ENCODE measurements at regions of chr2 and their contacts with region 1.

Region 1: DNA sequence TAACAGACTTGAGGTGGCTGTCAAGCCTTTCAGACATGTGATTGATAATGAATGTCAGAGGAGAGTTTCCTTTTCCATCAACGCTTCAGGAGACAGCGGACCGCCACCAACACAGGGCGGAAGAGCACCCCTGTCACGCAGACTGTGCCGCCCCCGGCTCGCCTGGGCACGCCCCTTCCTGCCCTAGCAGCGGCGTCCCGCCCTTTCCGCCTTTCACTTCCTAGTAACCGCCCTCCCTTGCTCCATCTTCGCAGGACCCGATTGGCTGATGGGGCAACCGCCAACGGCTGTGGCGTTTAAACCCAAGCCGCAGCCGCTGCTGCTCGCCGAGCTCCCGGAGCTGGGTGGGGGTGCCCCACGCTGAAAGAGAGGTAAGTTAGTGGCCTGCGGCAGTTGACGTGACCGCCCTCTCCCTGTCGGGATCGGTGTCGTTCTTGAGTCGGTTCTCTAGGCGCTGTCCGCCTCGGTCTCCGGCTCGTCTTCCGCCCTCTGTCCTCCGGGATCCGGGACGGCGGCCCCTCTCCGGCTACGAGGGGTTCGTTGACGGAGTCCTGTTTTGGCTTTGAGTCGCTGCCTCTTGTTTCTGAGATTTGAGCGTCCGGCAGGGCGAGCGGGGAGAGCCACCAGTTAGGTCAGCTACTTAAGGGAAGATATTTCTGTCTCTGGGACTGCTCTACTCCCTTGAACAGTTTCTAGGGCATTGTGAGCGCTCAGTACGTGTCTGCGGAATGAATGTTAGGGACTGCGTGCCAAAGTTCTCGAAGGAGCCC is at the start of gene SGO2:
- DNase-seq: peak; percentile 90
- ATAC-seq: peak; percentile 100
- H3K4me3 Mint-ChIP-seq: peak within 1 kb of the TSS; percentile 95
- H3K27ac Mint-ChIP-seq: peak within 1 kb of the TSS; percentile 80
- H3K4me1 Mint-ChIP-seq: peaks cover 14% of the 10 kb centered on the region
- H3K27me3 Mint-ChIP-seq: peaks cover 5% of the 10 kb centered on the region
- CTCF ChIP-seq: no peak
- total RNA-seq, gene SGO2: 3.3 and 3.8 TPM in 2 replicates

Region 2: GRCh38 chr2:199911052-199911876 is 614.8 kb before region 1 on chr2 and contains the start of gene C2orf69:
- CTCF ChIA-PET with region 1: no interaction called
- POLR2A ChIA-PET with region 1: no interaction called
- intact Hi-C with region 1: loop called (anchors 1 kb)
- DNase-seq: peak; percentile 86
- ATAC-seq: peak; percentile 83
- H3K4me3 Mint-ChIP-seq: peak within 1 kb of the TSS; percentile 94
- H3K27ac Mint-ChIP-seq: peak within 1 kb of the TSS; percentile 94
- H3K4me1 Mint-ChIP-seq: peaks cover 35% of the 10 kb centered on the region
- H3K27me3 Mint-ChIP-seq: no peaks in the 10 kb centered on the region
- CTCF ChIP-seq: no peak
- total RNA-seq, gene C2orf69: 12.1 and 12.6 TPM in 2 replicates

Region 3: DNA sequence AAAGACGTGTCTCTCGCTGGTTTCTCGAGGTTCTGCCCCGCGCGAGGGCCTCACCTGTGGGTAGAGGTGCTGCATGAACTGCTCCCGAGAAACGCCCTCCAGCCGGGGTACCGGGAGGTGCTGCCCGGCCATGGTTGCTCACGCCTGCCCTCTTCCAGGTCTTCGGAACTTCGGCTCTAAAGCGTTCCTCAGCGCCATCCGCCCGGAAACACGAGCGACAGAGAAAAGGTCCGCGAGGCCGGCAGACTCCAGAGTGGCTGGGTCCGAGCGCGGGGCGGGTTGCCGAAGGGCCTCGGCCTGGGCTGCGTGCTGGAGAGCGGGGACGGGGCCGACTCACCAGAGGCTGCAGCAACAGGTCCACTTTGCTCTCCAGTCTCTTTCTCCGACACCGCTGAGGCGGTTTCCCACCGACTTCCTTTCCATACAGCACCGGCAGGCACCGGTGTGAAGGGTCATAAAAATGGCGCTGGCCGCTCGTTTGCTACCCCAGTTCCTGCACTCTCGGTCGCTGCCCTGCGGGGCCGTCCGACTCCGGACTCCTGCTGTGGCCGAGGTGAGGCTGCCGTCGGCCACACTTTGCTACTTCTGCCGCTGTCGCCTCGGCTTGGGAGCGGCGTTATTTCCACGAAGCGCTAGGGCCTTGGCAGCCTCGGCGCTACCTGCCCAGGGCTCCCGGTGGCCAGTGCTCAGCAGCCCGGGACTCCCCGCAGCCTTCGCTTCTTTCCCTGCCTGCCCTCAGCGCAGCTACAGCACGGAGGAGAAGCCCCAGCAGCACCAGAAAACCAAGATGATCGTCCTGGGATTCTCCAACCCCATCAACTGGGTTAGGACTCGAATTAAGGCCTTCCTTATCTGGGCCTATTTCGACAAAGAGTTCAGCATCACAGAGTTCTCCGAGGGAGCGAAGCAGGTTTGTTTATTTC is 570.5 kb before region 1 on chr2 and contains the starts of genes MAIP1 and TYW5:
- CTCF ChIA-PET with region 1: no interaction called
- POLR2A ChIA-PET with region 1: no interaction called
- intact Hi-C with region 1: loop called (anchors 1 kb)
- DNase-seq: peak; percentile 75
- ATAC-seq: peak; percentile 87
- H3K4me3 Mint-ChIP-seq: peak within 1 kb of the TSS; percentile 99
- H3K27ac Mint-ChIP-seq: peak within 1 kb of the TSS; percentile 91
- H3K4me1 Mint-ChIP-seq: peaks cover 48% of the 10 kb centered on the region
- H3K27me3 Mint-ChIP-seq: no peaks in the 10 kb centered on the region
- CTCF ChIP-seq: no peak
- total RNA-seq, gene MAIP1: 20.2 and 20.7 TPM in 2 replicates
- total RNA-seq, gene TYW5: 10.5 and 12.5 TPM in 2 replicates

Region 4: GRCh38 chr2:200338701-200339100 is 187.4 kb before region 1 on chr2:
- CTCF ChIA-PET with region 1: no interaction called
- POLR2A ChIA-PET with region 1: no interaction called
- intact Hi-C with region 1: no loop called
- DNase-seq: no peak
- ATAC-seq: no peak
- H3K4me3 Mint-ChIP-seq: no peak overlapping the region
- H3K27ac Mint-ChIP-seq: no peak overlapping the region
- H3K4me1 Mint-ChIP-seq: no peaks in the 10 kb centered on the region
- H3K27me3 Mint-ChIP-seq: no peaks in the 10 kb centered on the region
- CTCF ChIP-seq: no peak

Region 5: GRCh38 chr2:200498402-200499162 is 27.5 kb before region 1 on chr2:
- CTCF ChIA-PET with region 1: no interaction called
- POLR2A ChIA-PET with region 1: no interaction called
- intact Hi-C with region 1: no loop called
- DNase-seq: no peak
- ATAC-seq: no peak
- H3K4me3 Mint-ChIP-seq: no peak overlapping the region
- H3K27ac Mint-ChIP-seq: no peak overlapping the region
- H3K4me1 Mint-ChIP-seq: no peaks in the 10 kb centered on the region
- H3K27me3 Mint-ChIP-seq: no peaks in the 10 kb centered on the region
- CTCF ChIP-seq: no peak

Region 6: GRCh38 chr2:200509612-200510433 is 16.2 kb before region 1 on chr2 and contains the start of gene KCTD18:
- CTCF ChIA-PET with region 1: interaction called, 14 read pairs
- POLR2A ChIA-PET with region 1: interaction called, 21 read pairs
- intact Hi-C with region 1: loop called (anchors 1 kb)
- DNase-seq: peak; percentile 93
- ATAC-seq: peak; percentile 99
- H3K4me3 Mint-ChIP-seq: peak within 1 kb of the TSS; percentile 90
- H3K27ac Mint-ChIP-seq: peak within 1 kb of the TSS; percentile 88
- H3K4me1 Mint-ChIP-seq: peaks cover 27% of the 10 kb centered on the region
- H3K27me3 Mint-ChIP-seq: peaks cover 2% of the 10 kb centered on the region
- CTCF ChIP-seq: peak; percentile 62
- total RNA-seq, gene KCTD18: 18.5 and 18.9 TPM in 2 replicates

Region 7: GRCh38 chr2:200864176-200864976 is 338.3 kb after region 1 on chr2 and contains the start of gene CLK1:
- CTCF ChIA-PET with region 1: no interaction called
- POLR2A ChIA-PET with region 1: interaction called, 3 read pairs
- intact Hi-C with region 1: loop called (anchors 5 kb)
- DNase-seq: peak; percentile 90
- ATAC-seq: peak; percentile 82
- H3K4me3 Mint-ChIP-seq: peak within 1 kb of the TSS; percentile 100
- H3K27ac Mint-ChIP-seq: peak within 1 kb of the TSS; percentile 100
- H3K4me1 Mint-ChIP-seq: peaks cover 41% of the 10 kb centered on the region
- H3K27me3 Mint-ChIP-seq: no peaks in the 10 kb centered on the region
- CTCF ChIP-seq: no peak
- total RNA-seq, gene CLK1: 173 and 203 TPM in 2 replicates

Region 8: DNA sequence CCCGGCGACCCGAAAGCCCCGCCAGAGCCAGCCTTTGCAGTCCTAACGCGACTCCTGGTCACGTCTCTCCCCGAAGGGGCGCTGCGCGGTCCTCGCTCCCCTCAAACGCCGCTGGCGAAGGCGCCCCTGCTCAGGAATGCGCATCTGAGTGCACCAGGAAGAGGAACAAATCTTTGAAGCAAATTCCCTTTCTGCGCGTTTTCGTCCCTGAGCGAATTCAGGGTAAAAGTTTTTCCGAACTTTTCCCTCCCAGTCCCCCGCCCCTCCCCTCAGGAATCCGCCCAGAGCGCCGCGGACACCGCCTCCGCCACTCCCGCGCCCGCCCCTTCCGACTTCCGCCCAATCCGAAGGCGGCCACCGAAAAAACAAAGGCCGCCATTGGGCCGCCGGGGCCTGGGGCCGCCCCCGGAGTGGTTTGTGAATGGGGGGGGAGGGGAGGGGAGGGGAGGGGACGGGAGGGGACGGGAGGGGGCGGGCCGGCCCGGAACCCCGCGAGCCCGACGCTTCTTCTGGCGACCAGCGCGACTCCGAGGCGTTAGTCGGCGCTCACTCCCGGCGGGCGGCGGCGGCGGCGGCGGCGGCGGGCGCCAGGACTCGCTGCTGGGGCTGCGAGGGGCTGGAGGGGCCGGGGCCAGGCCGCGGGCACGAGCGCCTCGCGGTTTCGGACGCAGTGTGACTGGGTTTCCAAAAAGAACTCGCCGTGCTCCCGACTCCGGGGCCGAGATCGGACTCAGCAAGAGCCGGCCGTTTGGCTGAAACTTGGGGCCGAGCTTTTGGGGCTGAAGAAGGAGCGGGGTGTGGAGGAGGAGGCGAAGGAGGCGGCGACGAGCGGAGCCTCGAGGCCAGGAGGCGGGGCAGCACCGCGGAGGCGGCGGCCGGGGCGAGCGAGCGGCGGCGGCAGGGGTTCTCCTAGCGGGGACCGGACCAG is 1507.5 kb after region 1 on chr2 and contains the start of gene FZD7:
- CTCF ChIA-PET with region 1: no interaction called
- POLR2A ChIA-PET with region 1: no interaction called
- intact Hi-C with region 1: loop called (anchors 5 kb)
- DNase-seq: peak; percentile 79
- ATAC-seq: peak; percentile 87
- H3K4me3 Mint-ChIP-seq: peak within 1 kb of the TSS; percentile 86
- H3K27ac Mint-ChIP-seq: peak within 1 kb of the TSS; percentile 14
- H3K4me1 Mint-ChIP-seq: peaks cover 12% of the 10 kb centered on the region
- H3K27me3 Mint-ChIP-seq: peaks cover 17% of the 10 kb centered on the region
- CTCF ChIP-seq: no peak
- total RNA-seq, gene FZD7: 0.33 and 0.37 TPM in 2 replicates